Colonic mucosa (tissue), 4 donors: ENCODE measurements at regions of chr6 and their contacts with region 1.

Region 1: DNA sequence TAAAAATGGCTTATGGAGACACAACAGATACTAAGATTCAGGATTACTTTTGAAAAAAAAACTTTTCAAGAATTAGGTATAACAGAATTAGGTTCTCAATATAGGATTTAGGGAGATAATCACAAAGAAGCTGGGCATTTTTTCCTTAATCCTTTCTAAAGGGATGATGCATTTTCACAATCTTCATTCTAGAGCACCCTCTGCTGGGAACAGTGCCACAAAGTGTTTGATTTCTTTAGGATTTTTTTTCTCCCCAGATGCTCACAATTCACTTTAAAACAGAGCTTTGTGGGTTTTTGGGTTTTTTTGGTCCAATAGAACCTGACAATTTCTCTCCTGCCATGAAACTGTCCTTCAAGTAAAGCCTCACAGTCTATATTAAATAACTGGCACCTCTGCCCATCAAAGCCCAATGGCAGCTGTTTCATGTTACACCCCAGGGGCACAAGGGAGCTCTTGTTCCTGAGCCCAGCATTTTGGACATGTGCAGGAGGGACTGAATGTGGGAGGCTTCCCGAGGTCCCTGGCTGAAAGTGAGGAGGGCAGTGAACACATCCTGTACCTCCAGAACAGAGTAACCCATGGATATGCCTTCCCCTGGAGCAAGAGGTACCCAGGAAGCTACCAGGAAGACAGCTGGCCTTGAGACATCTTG is 39.7 kb downstream of the PREP start:
- DNase-seq: no peak
- H3K4me3 ChIP-seq: no peak overlapping the region
- H3K27ac ChIP-seq: no peak overlapping the region
- H3K4me1 ChIP-seq: no peaks in the 10 kb centered on the region
- H3K27me3 ChIP-seq: no peaks in the 10 kb centered on the region
- CTCF ChIP-seq: no peak

Region 2: DNA sequence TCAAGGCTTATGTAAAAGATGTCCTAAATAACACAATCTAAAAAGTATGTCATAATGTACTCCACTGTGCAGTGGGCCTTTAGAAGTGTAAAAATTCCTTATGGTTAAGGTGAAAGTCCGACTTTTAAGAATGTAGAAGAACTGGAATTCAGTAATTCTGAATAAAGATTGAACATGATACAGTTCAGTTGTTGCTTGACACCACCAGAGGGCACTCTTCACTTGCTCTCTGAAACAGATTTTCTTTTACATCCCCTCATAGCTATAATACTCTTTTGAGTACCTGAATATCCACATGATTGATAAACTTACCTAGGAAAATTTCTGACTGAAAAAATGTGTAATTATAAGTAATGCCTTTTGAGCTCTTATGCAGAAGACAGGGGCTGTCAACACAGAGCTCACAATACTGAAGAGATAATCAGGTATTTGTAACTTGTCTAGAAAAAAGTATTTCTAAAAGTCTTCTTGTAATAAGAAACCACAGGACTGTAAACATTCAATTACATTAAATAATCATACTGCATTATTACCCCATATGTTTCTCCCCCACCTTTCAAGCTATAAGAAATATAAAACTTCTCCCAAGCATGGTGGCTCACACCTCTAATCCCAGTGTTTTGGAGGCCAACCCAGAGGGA is 275.5 kb before region 1 on chr6:
- intact Hi-C with region 1: loop called (anchors 5 kb)
- DNase-seq: peak; percentile 35
- H3K4me3 ChIP-seq: no peak overlapping the region
- H3K27ac ChIP-seq: no peak overlapping the region
- H3K4me1 ChIP-seq: no peaks in the 10 kb centered on the region
- H3K27me3 ChIP-seq: no peaks in the 10 kb centered on the region
- CTCF ChIP-seq: peak; percentile 85

Region 3: GRCh38 chr6:105324386-105324950 is 38.8 kb before region 1 on chr6:
- intact Hi-C with region 1: loop called (anchors 5 kb)
- DNase-seq: no peak
- H3K4me3 ChIP-seq: no peak overlapping the region
- H3K27ac ChIP-seq: no peak overlapping the region
- H3K4me1 ChIP-seq: no peaks in the 10 kb centered on the region
- H3K27me3 ChIP-seq: no peaks in the 10 kb centered on the region
- CTCF ChIP-seq: no peak

Region 4: DNA sequence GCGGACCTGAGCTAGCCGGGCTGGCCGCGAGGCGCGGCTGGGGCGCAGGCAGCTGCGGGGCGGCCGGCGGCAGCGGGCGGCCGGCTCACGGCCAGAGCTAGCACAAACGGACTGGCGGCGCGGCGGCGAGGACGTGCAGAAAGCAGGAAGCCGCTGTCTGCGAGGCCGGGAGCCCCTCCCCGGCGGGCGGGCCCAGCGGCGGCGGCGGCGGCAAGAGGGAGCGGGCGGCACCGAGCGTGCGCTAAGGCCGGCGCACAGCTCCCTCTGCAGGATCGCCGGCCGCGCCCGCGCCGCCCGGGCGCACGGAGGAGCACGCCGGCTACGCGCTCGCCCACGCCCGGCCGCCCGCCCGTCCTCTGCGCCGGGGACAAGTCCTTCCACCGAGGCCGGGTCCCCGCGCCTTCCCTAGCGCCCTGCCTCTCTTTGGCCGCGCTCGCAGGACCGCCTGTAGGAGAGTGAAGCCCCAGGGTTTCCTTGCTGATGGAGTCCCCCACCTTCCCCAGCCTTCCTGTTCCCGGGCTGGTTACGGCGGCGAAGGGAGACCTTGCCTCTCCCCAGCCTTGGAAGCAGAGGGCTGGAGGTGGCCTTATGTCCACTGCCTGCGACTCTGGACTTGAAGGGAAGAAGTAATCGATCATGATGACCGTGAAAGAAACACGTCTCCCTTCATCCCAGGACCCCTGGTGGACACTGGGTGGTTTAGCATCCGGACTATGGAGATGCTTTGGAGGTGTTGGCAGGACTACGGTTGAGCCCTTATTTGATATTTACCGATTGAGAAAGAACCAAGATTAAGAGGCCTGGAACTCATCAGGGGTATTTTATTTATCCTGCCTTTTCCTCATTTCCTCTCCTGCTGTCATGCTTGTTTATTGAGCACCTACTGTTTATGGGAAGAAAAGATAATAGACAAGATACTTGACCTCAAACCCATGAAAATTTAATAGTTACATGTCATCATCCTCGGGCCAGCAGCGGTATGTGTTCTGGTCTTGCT is 40.0 kb after region 1 on chr6 and contains the start of gene PREP:
- intact Hi-C with region 1: loop called (anchors 5 kb)
- DNase-seq: peak; percentile 87
- H3K4me3 ChIP-seq: peak within 1 kb of the TSS; percentile 90
- H3K27ac ChIP-seq: peak within 1 kb of the TSS; percentile 86
- H3K4me1 ChIP-seq: no peaks in the 10 kb centered on the region
- H3K27me3 ChIP-seq: no peaks in the 10 kb centered on the region
- CTCF ChIP-seq: peak; percentile 80
- total RNA-seq, gene PREP: 99.9 to 113 TPM

Region 5: GRCh38 chr6:105545947-105546731 is 182.9 kb after region 1 on chr6:
- intact Hi-C with region 1: no loop called
- DNase-seq: no peak
- H3K4me3 ChIP-seq: no peak overlapping the region
- H3K27ac ChIP-seq: peak overlapping the region; percentile 27
- H3K4me1 ChIP-seq: peaks cover 4% of the 10 kb centered on the region
- H3K27me3 ChIP-seq: no peaks in the 10 kb centered on the region
- CTCF ChIP-seq: no peak